Natural killer cell (primary cell): ENCODE measurements at regions of chr21 and their contacts with region 1.

Region 1: DNA sequence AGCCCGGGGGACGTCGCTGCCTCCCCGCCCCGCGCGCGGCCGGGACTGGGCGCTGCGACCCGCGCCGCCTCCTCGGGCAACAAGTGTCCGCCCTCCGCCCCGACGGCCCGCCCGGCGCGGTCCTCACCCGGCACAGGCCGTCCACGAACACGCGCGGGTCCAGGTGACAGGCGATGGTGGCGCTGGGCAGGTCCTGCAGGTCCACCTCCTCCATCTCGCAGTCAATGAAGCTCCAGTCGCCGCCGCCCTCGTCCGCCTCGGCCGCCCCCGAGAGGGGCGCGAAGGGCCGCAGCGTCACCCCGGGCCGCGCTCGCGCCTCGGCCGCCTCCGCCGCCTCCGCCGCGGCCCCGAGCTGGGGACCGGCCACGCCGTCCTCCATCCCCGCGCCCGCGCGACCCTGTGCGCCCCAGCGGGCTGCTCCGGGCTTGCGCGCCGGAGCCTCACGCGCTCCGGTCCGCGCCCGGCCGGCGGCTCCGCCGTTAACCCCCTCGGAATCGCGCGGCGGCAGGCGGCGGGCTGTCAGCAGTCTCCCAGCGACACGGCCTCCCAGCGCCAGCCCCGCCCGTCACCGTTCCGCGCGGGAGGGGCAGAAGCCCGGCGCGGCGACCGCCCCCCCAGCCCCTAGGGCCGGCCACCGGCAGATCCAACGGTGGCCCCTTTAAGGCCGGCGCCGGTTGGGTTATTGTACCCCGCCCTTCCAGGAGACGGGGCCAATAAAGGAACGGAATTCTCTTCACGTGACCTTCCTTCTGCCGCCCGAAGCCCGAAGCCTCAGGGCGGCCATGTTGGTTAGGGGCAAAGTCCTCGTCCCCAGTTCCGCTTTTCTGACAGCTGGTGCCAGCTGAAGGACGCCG is at the start of gene RCAN1:
- DNase-seq: peak; percentile 78 to 94
- ATAC-seq: peak; percentile 95 to 99 (median 97)
- H3K4me3 ChIP-seq: peak within 1 kb of the TSS; percentile 38
- H3K4me3 Mint-ChIP-seq: peak within 1 kb of the TSS; percentile 93
- H3K27ac ChIP-seq: peak within 1 kb of the TSS; percentile 71
- H3K27ac Mint-ChIP-seq: peak within 1 kb of the TSS; percentile 91 to 94
- H3K4me1 ChIP-seq: peaks cover 10% of the 10 kb centered on the region
- H3K4me1 Mint-ChIP-seq: peaks cover 28 to 30% of the 10 kb centered on the region in 2 donors
- H3K27me3 ChIP-seq: no peaks in the 10 kb centered on the region
- H3K27me3 Mint-ChIP-seq: peaks cover 0 to 6% of the 10 kb centered on the region in 2 donors
- CTCF ChIP-seq: no peak
- total RNA-seq, gene RCAN1: 6.7 to 8.9 (median 8.2) TPM

Region 2: GRCh38 chr21:33915368-33916199 is 699.3 kb before region 1 on chr21 and contains the start of gene ATP5PO:
- intact Hi-C with region 1: loop called (anchors 5 kb)
- DNase-seq: peak; percentile 92 to 98
- ATAC-seq: peak; percentile 99 to 100 (median 99)
- H3K4me3 ChIP-seq: peak within 1 kb of the TSS; percentile 86
- H3K4me3 Mint-ChIP-seq: peak within 1 kb of the TSS; percentile 100
- H3K27ac ChIP-seq: peak within 1 kb of the TSS; percentile 76
- H3K27ac Mint-ChIP-seq: peak within 1 kb of the TSS; percentile 98 to 99
- H3K4me1 ChIP-seq: peaks cover 13% of the 10 kb centered on the region
- H3K4me1 Mint-ChIP-seq: peaks cover 33 to 40% of the 10 kb centered on the region in 2 donors
- H3K27me3 ChIP-seq: no peaks in the 10 kb centered on the region
- H3K27me3 Mint-ChIP-seq: no peaks in the 10 kb centered on the region
- CTCF ChIP-seq: no peak
- total RNA-seq, gene ATP5PO: 80.4 to 95.4 (median 94.9) TPM

Region 3: DNA sequence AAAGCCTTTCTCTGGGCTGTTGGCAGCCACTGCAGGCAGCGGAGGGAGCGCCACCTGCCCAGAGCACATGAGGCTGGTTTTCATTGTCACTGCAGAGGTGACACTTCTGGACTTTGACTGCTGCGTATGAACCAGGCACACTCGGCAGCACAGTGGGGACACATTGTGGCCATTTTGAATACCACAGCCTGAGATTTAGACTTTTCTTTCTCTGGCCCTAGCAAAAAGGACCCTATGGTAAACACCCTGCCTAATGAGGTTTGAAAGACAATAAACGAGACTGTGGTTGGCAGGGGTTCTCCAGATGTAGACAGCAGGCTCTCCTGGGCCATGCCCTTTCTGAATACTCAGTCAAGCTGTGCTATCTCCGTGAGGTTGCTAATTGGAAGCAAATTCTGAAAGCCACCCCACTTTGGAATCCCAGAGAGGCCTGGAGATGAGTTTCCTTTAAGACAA is 263.0 kb before region 1 on chr21:
- intact Hi-C with region 1: no loop called
- DNase-seq: peak in 1 of 2 donors; percentile 50
- ATAC-seq: peak; percentile 71 to 83 (median 72)
- H3K4me3 ChIP-seq: no peak overlapping the region
- H3K4me3 Mint-ChIP-seq: no peak overlapping the region
- H3K27ac ChIP-seq: no peak overlapping the region
- H3K27ac Mint-ChIP-seq: no peak overlapping the region
- H3K4me1 ChIP-seq: peaks cover 2% of the 10 kb centered on the region
- H3K4me1 Mint-ChIP-seq: peaks cover 6 to 10% of the 10 kb centered on the region in 2 donors
- H3K27me3 ChIP-seq: no peaks in the 10 kb centered on the region
- H3K27me3 Mint-ChIP-seq: peaks cover 19 to 23% of the 10 kb centered on the region in 2 donors
- CTCF ChIP-seq: peak; percentile 34

Region 4: DNA sequence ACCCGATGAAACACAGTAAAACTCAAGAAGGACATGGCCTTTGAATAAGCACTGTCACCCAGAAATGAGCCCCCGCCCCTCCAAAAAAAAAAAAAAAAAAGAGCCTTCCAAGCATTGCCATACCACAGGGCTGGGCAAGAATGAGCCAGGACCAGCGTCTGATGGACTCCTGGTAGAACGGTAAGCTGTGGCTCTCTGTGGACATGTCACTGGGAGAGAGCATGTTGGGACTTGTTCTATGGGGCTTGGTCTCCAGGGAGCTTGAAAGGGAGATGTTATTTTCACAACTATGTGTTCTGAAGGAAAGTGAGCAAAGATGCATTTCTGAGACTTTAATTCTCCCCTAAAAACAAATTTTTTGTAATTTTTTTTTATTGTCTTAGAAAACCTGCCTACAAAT is 60.3 kb after region 1 on chr21:
- intact Hi-C with region 1: loop called (anchors 2 kb)
- DNase-seq: no peak
- ATAC-seq: no peak
- H3K4me3 ChIP-seq: no peak overlapping the region
- H3K4me3 Mint-ChIP-seq: no peak overlapping the region
- H3K27ac ChIP-seq: no peak overlapping the region
- H3K27ac Mint-ChIP-seq: no peak overlapping the region
- H3K4me1 ChIP-seq: peaks cover 7% of the 10 kb centered on the region
- H3K4me1 Mint-ChIP-seq: peaks cover 0 to 8% of the 10 kb centered on the region in 2 donors
- H3K27me3 ChIP-seq: peaks cover 11% of the 10 kb centered on the region
- H3K27me3 Mint-ChIP-seq: peaks cover 29 to 56% of the 10 kb centered on the region in 2 donors
- CTCF ChIP-seq: no peak